Psoas muscle (tissue), 8 donors: ENCODE measurements at regions of chr19 and their contacts with region 1.

Region 1: DNA sequence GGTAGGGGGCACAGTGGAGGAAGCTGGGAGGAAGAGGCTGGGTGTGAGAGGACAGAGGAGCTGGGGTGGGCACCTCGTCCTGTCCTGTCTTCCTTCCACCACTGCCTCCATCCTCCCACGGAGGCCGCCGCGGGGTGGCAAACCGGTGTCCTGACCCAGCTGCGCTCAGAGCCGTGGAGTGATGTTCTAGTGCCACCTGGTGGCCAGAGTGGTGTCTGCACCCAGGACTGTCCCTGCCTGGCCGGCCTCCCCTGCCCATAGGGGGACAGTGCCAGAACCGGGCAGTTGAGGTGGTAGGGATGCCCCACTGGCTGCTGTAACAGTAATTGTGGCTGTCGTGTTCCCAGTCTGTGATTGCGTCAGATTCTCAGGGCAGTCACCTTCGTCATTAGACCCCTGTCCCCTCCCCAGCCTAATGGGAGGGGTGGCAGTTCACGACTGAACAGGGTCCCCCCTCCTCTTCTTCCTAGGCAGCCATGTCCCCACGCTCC is 11.1 kb upstream of the ARRDC2 start:
- DNase-seq: peak; percentile 86 to 94
- ATAC-seq: peak; percentile 90 to 95 (median 92)
- H3K4me3 ChIP-seq: no peak overlapping the region
- H3K27ac ChIP-seq: no peak overlapping the region
- H3K4me1 ChIP-seq: no peaks in the 10 kb centered on the region
- H3K27me3 ChIP-seq: peaks cover 0 to 13% (median 0%) of the 10 kb centered on the region in 3 donors
- CTCF ChIP-seq: peak; percentile 98

Region 2: DNA sequence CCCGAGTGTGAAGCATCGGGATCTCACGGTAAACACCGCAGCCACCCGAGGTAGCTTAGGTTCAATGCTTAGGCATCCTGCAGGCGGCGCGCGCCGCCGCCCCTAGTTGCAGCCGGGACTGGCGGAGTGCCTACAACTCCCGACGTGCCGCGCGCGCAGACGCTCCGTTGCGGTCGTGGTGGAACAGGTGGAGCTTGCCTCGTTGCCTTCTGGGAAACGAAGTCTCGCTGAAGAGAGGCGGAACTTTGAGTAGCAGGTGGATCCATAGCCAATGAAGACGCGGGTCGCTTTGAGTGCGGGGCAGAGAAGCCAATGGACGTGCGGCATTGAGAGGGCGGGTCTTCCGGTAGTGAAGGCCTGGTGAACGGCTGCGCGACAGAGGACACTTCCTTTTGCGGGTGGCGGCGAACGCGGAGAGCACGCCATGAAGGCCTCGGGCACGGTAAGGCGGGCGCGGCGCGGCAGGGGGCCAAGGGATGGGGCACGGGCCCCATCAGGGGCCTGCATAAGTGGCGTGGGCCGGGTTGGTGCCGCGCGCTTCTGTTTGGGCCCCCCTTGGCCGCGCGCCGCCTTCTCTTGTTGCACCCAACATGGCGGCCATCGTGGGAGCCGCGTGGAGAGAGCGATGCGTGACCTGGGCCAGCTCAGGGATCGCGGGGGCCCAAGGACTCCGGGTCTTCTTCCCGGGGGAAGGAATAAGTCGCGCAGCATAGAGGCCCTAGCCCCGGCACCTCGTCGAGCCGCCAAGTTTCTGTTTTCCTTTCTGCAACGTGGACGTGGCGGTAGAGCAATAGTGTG is 137.1 kb before region 1 on chr19 and contains the start of gene RPL18A:
- intact Hi-C with region 1: loop called in 1 of 2 experiments (anchors 5 kb)
- DNase-seq: peak; percentile 98 to 99
- ATAC-seq: peak; percentile 90 to 94 (median 92)
- H3K4me3 ChIP-seq: peak within 1 kb of the TSS; percentile 98
- H3K27ac ChIP-seq: peak within 1 kb of the TSS; percentile 99
- H3K4me1 ChIP-seq: peaks cover 29% of the 10 kb centered on the region
- H3K27me3 ChIP-seq: no peaks in the 10 kb centered on the region
- CTCF ChIP-seq: peak; percentile 71
- total RNA-seq, gene RPL18A: 1,164 to 1,735 (median 1,510) TPM

Region 3: GRCh38 chr19:17865364-17866311 is 131.2 kb before region 1 on chr19:
- intact Hi-C with region 1: loop called in 1 of 2 experiments (anchors 5 kb)
- DNase-seq: no peak
- ATAC-seq: peak; percentile 11 to 25 (median 18)
- H3K4me3 ChIP-seq: no peak overlapping the region
- H3K27ac ChIP-seq: peak overlapping the region; percentile 99
- H3K4me1 ChIP-seq: peaks cover 29% of the 10 kb centered on the region
- H3K27me3 ChIP-seq: peaks cover 0 to 10% (median 6%) of the 10 kb centered on the region in 3 donors
- CTCF ChIP-seq: no peak

Region 4: DNA sequence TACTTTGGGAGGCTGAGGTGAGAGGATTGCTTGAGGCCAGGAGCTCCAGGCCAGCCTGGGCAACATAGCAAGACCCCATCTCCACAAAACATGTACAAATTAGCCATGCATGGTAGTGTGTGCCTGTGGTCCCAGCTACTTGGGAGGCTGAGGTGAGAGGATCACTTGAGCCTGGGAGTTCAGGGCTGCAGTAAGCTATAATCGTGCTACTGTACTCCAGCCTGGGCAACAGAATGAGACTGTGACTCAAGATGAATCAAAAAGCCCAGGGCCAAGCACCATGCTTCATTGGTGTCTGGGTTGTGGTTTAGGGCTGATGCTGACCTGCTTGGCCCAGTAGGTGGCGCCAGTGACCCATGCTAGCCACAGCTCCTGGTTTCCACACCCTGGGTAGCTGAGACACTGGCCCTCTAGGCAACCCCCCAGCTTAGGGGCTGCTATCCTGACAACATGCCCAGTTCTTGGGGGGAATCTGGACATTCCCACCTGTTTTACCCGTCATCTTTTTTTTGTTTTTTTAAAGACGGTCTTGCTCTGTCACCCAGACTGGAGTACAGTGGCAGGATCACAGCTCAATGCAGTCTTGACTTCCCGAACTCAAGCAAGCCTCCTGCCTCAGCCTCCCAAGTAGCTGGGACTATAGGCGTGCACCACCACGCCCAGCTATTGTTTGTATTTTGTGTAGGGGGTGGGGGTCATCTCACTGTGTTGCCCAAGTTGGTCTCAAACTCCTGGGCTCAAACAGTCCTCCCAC is 58.6 kb before region 1 on chr19:
- intact Hi-C with region 1: loop called (anchors 1 to 2 kb)
- DNase-seq: peak; percentile 80 to 88
- ATAC-seq: peak; percentile 81 to 90 (median 86)
- H3K4me3 ChIP-seq: no peak overlapping the region
- H3K27ac ChIP-seq: no peak overlapping the region
- H3K4me1 ChIP-seq: peaks cover 12% of the 10 kb centered on the region
- H3K27me3 ChIP-seq: no peaks in the 10 kb centered on the region
- CTCF ChIP-seq: peak; percentile 88

Region 5: GRCh38 chr19:17947815-17948513 is 48.9 kb before region 1 on chr19:
- intact Hi-C with region 1: loop called (anchors 2 kb)
- DNase-seq: peak; percentile 90 to 95
- ATAC-seq: peak; percentile 85 to 90 (median 89)
- H3K4me3 ChIP-seq: peak overlapping the region; percentile 82
- H3K27ac ChIP-seq: no peak overlapping the region
- H3K4me1 ChIP-seq: peaks cover 15% of the 10 kb centered on the region
- H3K27me3 ChIP-seq: peaks cover 0 to 42% (median 36%) of the 10 kb centered on the region in 3 donors
- CTCF ChIP-seq: no peak